ENCODE measurements at regions of chr1 and their contacts with region 1.

Region 1: DNA sequence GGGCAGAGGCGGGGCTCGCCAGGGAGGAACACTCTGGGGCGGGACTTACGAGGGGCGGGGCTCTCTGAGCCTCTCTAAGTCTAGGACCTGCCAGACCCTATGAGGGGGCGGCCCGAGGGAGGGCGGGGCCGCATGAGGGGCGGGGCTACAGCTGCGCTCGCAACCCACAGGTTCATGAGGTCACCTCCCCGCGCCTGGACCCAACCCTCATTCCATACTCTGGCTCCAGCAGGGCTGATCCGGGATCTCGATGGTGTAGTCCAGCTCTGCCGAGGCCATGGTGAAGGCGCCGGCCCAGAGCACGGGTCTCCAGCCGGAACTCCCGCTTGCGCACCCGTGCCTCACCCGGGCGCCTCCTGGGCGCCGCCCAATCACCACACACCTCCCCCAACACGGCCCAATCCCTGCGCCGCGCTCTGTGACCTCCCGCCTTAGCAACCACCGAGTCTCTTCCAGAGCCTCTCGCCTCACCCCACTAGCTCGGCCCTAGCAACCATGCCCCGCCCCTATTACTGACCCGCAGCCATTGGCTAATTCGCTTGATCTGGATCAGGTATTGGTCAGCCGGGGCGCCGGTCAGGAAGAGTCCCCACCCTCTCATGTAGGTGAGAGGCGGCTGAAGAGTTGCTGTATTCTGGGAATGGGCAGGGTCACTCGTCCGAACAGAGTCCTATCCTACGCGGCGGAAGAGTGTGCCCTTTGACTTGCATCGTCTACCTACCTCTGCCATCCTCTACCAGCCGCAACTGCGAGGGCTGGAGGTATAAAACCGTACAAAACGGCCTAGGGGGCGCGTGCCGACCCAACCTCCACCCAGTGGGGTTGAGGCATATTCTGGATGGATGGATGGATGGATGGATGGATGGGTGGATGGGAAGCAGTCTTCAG is at the starts of genes ARMH1 and TMEM53:
- DNase-seq: peak; percentile 100
- ATAC-seq: peak; percentile 96
- H3K4me3 Mint-ChIP-seq: peak within 1 kb of the TSS; percentile 78
- H3K27ac Mint-ChIP-seq: peak within 1 kb of the TSS; percentile 90
- H3K4me1 Mint-ChIP-seq: peaks cover 32% of the 10 kb centered on the region
- H3K27me3 Mint-ChIP-seq: no peaks in the 10 kb centered on the region
- total RNA-seq, gene ARMH1: 17.0 to 17.2 TPM
- total RNA-seq, gene TMEM53: 3.6 to 3.7 TPM

Region 2: DNA sequence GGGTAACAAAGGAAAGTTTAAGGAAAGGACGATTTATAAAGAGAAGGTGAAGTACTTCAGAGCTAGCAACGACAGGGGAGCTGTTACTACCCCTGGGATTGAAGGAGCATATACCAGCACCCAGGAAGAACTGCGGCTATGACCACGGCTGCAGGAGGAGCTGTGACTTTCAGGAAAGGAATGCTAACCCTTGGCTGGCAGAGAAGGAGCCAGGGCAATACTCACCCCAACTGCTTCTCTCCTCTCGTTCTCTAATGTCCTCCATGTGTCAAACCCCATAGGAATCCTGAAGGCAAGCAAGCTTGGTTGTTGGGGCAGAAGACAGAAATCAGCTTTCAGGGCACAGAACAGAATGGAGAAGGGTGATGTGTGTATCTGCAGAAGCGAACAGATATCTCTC is 120.6 kb before region 1 on chr1:
- CTCF ChIA-PET with region 1: no interaction called
- DNase-seq: no peak
- ATAC-seq: no peak
- H3K4me3 Mint-ChIP-seq: no peak overlapping the region
- H3K27ac Mint-ChIP-seq: no peak overlapping the region
- H3K4me1 Mint-ChIP-seq: peaks cover 2% of the 10 kb centered on the region
- H3K27me3 Mint-ChIP-seq: peaks cover 20% of the 10 kb centered on the region

Region 3: DNA sequence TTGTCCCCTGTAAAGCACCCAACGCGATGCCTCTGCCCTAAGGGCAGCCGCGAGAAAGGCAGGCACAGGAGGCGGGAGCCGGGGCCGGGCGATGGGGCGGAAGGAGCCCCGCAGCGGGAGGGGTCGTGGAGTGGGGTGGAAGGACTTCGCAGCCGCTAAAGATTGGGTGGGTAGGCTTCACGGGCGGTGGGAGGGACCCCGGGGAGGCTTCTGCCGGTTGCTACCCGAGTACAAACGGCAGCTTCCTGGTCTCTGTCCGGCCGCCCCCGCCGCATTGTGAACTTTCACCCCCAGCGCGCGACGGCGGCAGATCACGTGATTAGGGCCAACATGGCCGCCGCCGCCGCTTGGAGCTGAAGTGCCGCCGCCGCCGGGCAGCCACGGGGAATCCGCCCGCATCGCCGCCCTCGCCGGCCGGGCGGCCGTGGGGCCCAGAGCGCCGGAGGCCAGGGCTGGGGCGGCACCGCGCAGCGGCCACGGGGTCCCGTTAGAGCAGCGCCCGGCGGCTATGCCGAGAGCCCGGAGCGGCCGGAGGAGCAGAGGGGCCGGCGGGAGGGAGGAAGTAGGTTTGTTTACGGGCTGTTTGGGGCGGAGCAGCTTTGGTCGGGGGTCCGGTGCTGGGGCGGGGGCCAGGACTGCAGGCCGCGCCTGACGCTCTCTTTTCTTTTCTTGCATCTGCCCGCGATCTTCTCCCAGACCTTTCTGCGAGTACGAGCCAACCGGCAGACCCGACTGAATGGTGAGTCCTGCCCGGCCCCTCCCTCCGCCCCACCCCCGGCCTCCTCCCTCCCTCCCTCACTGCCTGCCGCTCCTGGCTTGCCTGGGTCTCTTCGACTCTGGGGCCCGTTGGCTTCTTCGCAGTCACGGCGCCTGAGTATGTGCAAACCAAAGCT is 42.5 kb before region 1 on chr1:
- CTCF ChIA-PET with region 1: interaction called, 13 read pairs
- DNase-seq: peak; percentile 95
- ATAC-seq: peak; percentile 83
- H3K4me3 Mint-ChIP-seq: peak overlapping the region; percentile 84
- H3K27ac Mint-ChIP-seq: peak overlapping the region; percentile 95
- H3K4me1 Mint-ChIP-seq: peaks cover 35% of the 10 kb centered on the region
- H3K27me3 Mint-ChIP-seq: no peaks in the 10 kb centered on the region

Region 4: DNA sequence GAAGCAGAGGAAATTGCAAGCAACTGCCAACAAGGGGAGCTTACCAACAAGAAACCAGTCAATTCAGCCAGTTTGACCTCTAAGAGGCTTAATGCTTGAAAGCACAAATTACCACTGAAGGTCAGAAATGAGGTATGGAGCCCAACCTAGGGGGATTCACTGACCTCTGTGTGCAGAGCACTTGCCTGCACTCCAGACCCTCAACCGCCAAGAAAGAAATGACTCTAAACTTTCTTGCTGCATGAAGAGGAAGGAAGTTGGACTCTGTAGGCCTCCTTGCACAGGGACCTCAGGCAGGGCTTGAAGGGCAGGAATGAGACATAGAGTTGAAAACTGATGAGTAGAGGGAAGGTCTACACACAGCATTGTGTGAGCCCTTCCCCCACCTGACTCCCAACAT is 10.2 kb after region 1 on chr1:
- CTCF ChIA-PET with region 1: interaction called, 18 read pairs
- DNase-seq: peak; percentile 45
- ATAC-seq: peak; percentile 57
- H3K4me3 Mint-ChIP-seq: no peak overlapping the region
- H3K27ac Mint-ChIP-seq: peak overlapping the region; percentile 44
- H3K4me1 Mint-ChIP-seq: peaks cover 15% of the 10 kb centered on the region
- H3K27me3 Mint-ChIP-seq: no peaks in the 10 kb centered on the region

Region 5: DNA sequence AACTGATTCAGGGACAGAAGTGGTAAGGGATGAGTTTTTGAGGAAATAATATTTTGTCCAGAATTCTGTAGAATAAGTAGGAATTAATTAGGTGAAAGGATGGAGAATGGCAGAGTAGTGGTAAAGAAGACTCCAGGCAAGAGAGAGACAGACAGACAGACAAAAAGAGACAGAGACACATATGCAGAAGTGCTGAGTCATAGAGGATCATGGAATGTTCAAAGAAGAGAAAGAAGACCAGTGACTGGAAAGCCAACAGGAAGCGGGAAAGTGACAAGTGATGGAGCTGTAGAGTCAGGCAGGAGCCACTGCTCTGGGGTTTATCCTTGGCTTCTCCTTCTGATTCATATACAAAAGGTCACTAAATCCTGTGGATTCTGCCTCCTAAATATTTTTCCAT is 423.6 kb after region 1 on chr1:
- CTCF ChIA-PET with region 1: no interaction called
- DNase-seq: no peak
- ATAC-seq: no peak
- H3K4me3 Mint-ChIP-seq: no peak overlapping the region
- H3K27ac Mint-ChIP-seq: no peak overlapping the region
- H3K4me1 Mint-ChIP-seq: no peaks in the 10 kb centered on the region
- H3K27me3 Mint-ChIP-seq: peaks cover 8% of the 10 kb centered on the region

Measured in activated CD8-positive, alpha-beta memory T cell treated with anti-CD3 and anti-CD28 coated beads, Interleukin-2, amount 10 ng/mL, durations not matched to agents 7 days and 5 days (primary cell).